Cardiac septum (tissue), 1 donor: ENCODE measurements at regions of chr1 and their contacts with region 1.

Region 1: GRCh38 chr1:202315576-202316168 is 26.1 kb downstream of the UBE2T start:
- DNase-seq: no peak

Region 2: DNA sequence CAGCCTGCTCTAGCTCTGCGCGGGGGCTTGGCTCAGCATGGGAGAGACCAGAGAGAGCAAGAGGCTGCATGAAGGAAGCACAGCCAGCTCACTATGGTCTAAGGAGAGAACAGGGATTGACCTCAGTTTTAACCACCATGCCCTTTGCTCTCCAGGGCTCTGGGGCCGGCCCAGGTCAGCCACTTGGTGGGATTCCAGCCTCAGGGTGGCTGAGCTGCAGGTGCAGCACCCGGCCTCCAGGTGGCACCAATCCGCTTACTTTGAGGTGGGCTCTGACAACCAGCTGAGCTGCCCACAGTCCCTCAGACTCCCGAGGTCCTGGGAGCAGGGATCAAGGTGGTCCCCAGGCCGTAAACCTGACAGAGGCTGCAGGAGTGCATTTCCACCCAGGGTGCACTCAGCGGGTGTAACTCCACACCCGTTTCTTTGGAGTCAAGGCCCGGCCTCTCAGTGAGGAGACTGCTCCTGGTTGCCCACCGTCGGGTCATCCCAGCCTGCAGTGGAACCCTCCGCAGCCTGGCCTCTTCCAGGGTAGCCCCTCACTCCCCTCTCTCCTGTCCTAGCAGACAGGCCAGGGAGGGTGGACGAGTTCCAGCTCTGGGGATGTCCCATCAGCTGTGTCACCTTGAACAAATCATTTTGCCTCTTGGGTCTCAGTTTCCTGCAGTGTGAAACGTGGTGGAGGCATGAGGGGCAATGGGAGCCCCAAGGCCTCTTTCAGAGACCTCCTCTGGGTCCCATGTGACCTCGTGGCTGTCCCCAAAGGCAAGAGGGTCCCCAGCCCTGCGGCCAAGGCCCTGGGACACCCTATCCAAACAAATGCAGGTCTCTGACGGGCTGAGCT is 122.7 kb before region 1 on chr1:
- intact Hi-C with region 1: loop called (anchors 1 kb)
- DNase-seq: no peak

Region 3: GRCh38 chr1:202274611-202275010 is 41.1 kb before region 1 on chr1:
- intact Hi-C with region 1: loop called (anchors 2 kb)
- DNase-seq: no peak